Esophagus muscularis mucosa (tissue), 4 donors: ENCODE measurements at regions of chr9 and their contacts with region 1.

Region 1: DNA sequence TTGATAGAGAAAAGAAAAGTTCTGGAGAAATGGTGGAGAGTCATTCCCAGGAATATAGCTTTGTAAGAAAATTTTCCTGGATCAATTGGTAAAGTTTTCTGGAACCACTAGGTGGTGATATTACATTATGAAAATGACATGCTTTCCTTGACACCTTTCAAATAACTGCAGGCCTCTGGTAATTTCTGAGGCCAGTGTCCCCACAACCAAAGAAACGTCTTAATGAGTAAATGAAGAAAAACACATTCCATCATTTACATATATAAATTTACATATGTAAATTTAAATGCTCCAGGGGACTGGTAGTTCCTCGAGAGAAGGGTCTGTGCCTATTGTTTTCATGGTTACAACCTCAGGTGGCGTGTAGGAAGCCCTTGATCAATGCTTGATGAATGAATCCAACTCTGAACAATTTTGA is 17.2 kb upstream of the RGS3 start:
- DNase-seq: no peak
- H3K4me3 ChIP-seq: no peak overlapping the region
- H3K27ac ChIP-seq: peak overlapping the region in 3 of 4 donors; percentile 15 to 27 (median 21)
- H3K4me1 ChIP-seq: peaks cover 4 to 21% (median 14%) of the 10 kb centered on the region in 4 donors
- H3K27me3 ChIP-seq: no peaks in the 10 kb centered on the region
- CTCF ChIP-seq: peak; percentile 67 to 71 (median 69)
- EP300 ChIP-seq: no peak
- POLR2A ChIP-seq: no peak

Region 2: GRCh38 chr9:113468716-113469448 is 22.6 kb after region 1 on chr9:
- intact Hi-C with region 1: no loop called
- DNase-seq: peak; percentile 84
- H3K4me3 ChIP-seq: no peak overlapping the region
- H3K27ac ChIP-seq: peak overlapping the region; percentile 42 to 64 (median 62)
- H3K4me1 ChIP-seq: peaks cover 0 to 54% (median 42%) of the 10 kb centered on the region in 4 donors
- H3K27me3 ChIP-seq: no peaks in the 10 kb centered on the region
- CTCF ChIP-seq: no peak
- EP300 ChIP-seq: no peak
- POLR2A ChIP-seq: no peak

Region 3: GRCh38 chr9:113508111-113508749 is 61.9 kb after region 1 on chr9:
- intact Hi-C with region 1: loop called (anchors 10 kb)
- DNase-seq: no peak
- H3K4me3 ChIP-seq: no peak overlapping the region
- H3K27ac ChIP-seq: peak overlapping the region in 3 of 4 donors; percentile 5 to 27 (median 24)
- H3K4me1 ChIP-seq: peaks cover 41 to 58% (median 50%) of the 10 kb centered on the region in 4 donors
- H3K27me3 ChIP-seq: no peaks in the 10 kb centered on the region
- CTCF ChIP-seq: no peak
- EP300 ChIP-seq: no peak
- POLR2A ChIP-seq: no peak

Region 4: GRCh38 chr9:113591001-113591898 is 144.9 kb after region 1 on chr9:
- intact Hi-C with region 1: loop called (anchors 2 kb)
- DNase-seq: peak; percentile 96
- H3K4me3 ChIP-seq: no peak overlapping the region
- H3K27ac ChIP-seq: peak overlapping the region; percentile 36 to 83 (median 72)
- H3K4me1 ChIP-seq: peaks cover 74 to 92% (median 87%) of the 10 kb centered on the region in 4 donors
- H3K27me3 ChIP-seq: no peaks in the 10 kb centered on the region
- CTCF ChIP-seq: peak; percentile 88 to 97 (median 89)
- EP300 ChIP-seq: no peak
- POLR2A ChIP-seq: no peak